GM12878 (cell line): ENCODE measurements at regions of chr4 and their contacts with region 1.

Region 1: GRCh38 chr4:85940151-85940550 is 419.7 kb downstream of the MAPK10 start:
- DNase-seq: no peak
- ATAC-seq: no peak
- H3K4me3 ChIP-seq: no peak overlapping the region
- H3K27ac ChIP-seq: no peak overlapping the region
- H3K4me1 ChIP-seq: no peaks in the 10 kb centered on the region
- H3K27me3 ChIP-seq: no peaks in the 10 kb centered on the region
- CTCF ChIP-seq: no peak
- EP300 ChIP-seq: no peak
- POLR2A ChIP-seq: no peak
- RAD21 ChIP-seq: no peak

Region 2: GRCh38 chr4:85953651-85954018 is 13.5 kb after region 1 on chr4:
- CTCF ChIA-PET with region 1: interaction called, 3 read pairs
- POLR2A ChIA-PET with region 1: no interaction called
- RAD21 ChIA-PET with region 1: no interaction called
- SMC1A ChIA-PET with region 1: interaction called, 3 read pairs
- in situ Hi-C with region 1: no loop called
- intact Hi-C with region 1: loop called (anchors 2 kb)
- DNase-seq: no peak
- ATAC-seq: peak; percentile 27; the same call in 1 of the 3 replicates
- H3K4me3 ChIP-seq: no peak overlapping the region
- H3K27ac ChIP-seq: no peak overlapping the region
- H3K4me1 ChIP-seq: no peaks in the 10 kb centered on the region
- H3K27me3 ChIP-seq: no peaks in the 10 kb centered on the region
- CTCF ChIP-seq: no peak
- EP300 ChIP-seq: no peak
- POLR2A ChIP-seq: no peak
- RAD21 ChIP-seq: no peak